Activated B cell treated with CpG ODN at 0.5 μM for 24 hours (primary cell): ENCODE measurements at regions of chr5 and their contacts with region 1.

Region 1: GRCh38 chr5:142108432-142109330 is at the start of gene NDFIP1:
- DNase-seq: peak; percentile 84
- ATAC-seq: peak; percentile 97
- H3K4me3 Mint-ChIP-seq: peak within 1 kb of the TSS; percentile 84
- H3K27ac Mint-ChIP-seq: peak within 1 kb of the TSS; percentile 83
- H3K4me1 Mint-ChIP-seq: peaks cover 31% of the 10 kb centered on the region
- H3K27me3 Mint-ChIP-seq: no peaks in the 10 kb centered on the region
- CTCF ChIP-seq: no peak
- total RNA-seq, gene NDFIP1: 19.7 and 24.2 TPM in 2 replicates

Region 2: GRCh38 chr5:141923448-141924352 is 185.0 kb before region 1 on chr5 and contains the start of gene DELE1:
- CTCF ChIA-PET with region 1: no interaction called
- POLR2A ChIA-PET with region 1: no interaction called
- intact Hi-C with region 1: loop called (anchors 2 kb)
- DNase-seq: peak; percentile 84
- ATAC-seq: peak; percentile 96
- H3K4me3 Mint-ChIP-seq: peak within 1 kb of the TSS; percentile 91
- H3K27ac Mint-ChIP-seq: peak within 1 kb of the TSS; percentile 95
- H3K4me1 Mint-ChIP-seq: peaks cover 23% of the 10 kb centered on the region
- H3K27me3 Mint-ChIP-seq: no peaks in the 10 kb centered on the region
- CTCF ChIP-seq: no peak
- total RNA-seq, gene DELE1: 95.0 and 114 TPM in 2 replicates

Region 3: DNA sequence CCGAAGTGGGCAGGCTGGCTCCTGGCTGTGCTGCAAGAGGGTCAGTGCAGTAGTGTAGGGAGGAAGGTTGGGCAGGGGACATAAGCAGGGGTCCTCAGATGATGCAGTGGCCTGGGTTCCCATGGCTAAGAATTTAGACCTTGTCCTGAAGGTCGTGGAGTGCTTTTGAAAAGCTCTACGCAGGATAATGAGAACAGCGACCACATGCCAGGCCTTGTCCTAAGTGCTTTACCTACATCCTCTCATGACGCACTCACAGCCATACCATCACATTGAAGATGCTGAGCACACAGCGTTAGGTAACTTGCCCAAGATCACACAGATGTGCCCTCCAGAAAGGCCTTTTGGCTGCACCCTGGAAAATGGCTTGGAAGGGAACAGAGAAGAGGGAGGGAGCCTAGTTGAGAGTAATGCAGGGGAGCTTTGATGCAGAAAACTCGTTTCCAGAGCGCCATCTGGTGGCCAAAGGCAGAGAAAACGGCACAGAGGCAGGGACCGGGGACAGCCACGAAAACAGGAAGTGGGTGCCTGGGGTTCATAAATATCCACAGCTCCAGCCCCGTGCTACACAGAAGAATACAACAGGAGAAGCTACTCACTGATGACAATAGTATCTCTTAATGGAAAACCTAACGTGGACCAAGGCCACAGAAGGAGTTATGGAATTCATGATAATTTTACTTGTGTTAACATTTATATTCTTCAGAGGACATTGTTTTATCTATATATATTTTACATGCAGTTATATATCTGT is 148.1 kb before region 1 on chr5:
- CTCF ChIA-PET with region 1: no interaction called
- POLR2A ChIA-PET with region 1: no interaction called
- intact Hi-C with region 1: no loop called
- DNase-seq: peak; percentile 77
- ATAC-seq: peak; percentile 99
- H3K4me3 Mint-ChIP-seq: peak overlapping the region; percentile 9
- H3K27ac Mint-ChIP-seq: peak overlapping the region; percentile 75
- H3K4me1 Mint-ChIP-seq: peaks cover 18% of the 10 kb centered on the region
- H3K27me3 Mint-ChIP-seq: peaks cover 3% of the 10 kb centered on the region
- CTCF ChIP-seq: no peak

Region 4: DNA sequence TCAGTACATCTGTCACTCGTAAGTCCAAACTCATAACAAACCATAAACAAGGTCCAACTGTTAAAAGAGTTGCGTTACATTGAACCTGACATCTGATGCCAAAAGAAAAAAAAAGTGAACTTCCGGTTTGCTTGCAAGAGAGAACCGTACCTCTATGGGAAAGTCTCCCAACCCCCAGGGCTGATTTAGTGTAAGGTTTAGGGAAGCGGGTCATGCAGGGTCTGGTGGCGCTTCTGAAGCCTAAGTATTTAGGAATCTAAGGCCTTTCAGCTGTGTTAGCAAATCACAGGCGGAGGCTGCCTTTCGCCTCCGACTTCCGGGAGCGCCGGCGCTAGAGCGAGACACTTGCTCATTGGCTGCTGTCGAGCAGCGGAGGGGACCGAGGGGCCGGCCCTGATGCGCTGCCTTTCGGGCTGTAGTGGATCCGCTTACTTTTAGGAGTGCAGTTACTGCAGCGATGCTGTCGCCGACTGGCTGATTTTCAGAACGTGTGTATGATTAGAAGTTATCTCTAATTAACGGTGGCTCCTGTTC is 83.8 kb before region 1 on chr5:
- CTCF ChIA-PET with region 1: no interaction called
- POLR2A ChIA-PET with region 1: interaction called, 3 read pairs
- intact Hi-C with region 1: loop called (anchors 1 kb)
- DNase-seq: peak; percentile 65
- ATAC-seq: peak; percentile 100
- H3K4me3 Mint-ChIP-seq: peak overlapping the region; percentile 92
- H3K27ac Mint-ChIP-seq: peak overlapping the region; percentile 97
- H3K4me1 Mint-ChIP-seq: peaks cover 13% of the 10 kb centered on the region
- H3K27me3 Mint-ChIP-seq: peaks cover 25% of the 10 kb centered on the region
- CTCF ChIP-seq: no peak

Region 5: GRCh38 chr5:142046191-142046590 is 62.5 kb before region 1 on chr5:
- CTCF ChIA-PET with region 1: no interaction called
- POLR2A ChIA-PET with region 1: no interaction called
- intact Hi-C with region 1: no loop called
- DNase-seq: no peak
- ATAC-seq: no peak
- H3K4me3 Mint-ChIP-seq: no peak overlapping the region
- H3K27ac Mint-ChIP-seq: no peak overlapping the region
- H3K4me1 Mint-ChIP-seq: no peaks in the 10 kb centered on the region
- H3K27me3 Mint-ChIP-seq: no peaks in the 10 kb centered on the region
- CTCF ChIP-seq: no peak

Region 6: GRCh38 chr5:142079306-142079721 is 29.4 kb before region 1 on chr5:
- CTCF ChIA-PET with region 1: no interaction called
- POLR2A ChIA-PET with region 1: no interaction called
- intact Hi-C with region 1: no loop called
- DNase-seq: no peak
- ATAC-seq: no peak
- H3K4me3 Mint-ChIP-seq: no peak overlapping the region
- H3K27ac Mint-ChIP-seq: no peak overlapping the region
- H3K4me1 Mint-ChIP-seq: no peaks in the 10 kb centered on the region
- H3K27me3 Mint-ChIP-seq: peaks cover 8% of the 10 kb centered on the region
- CTCF ChIP-seq: no peak

Region 7: GRCh38 chr5:142145106-142145900 is 36.6 kb after region 1 on chr5:
- CTCF ChIA-PET with region 1: interaction called, 4 read pairs
- POLR2A ChIA-PET with region 1: no interaction called
- intact Hi-C with region 1: loop called (anchors 1 kb)
- DNase-seq: no peak
- ATAC-seq: peak; percentile 86
- H3K4me3 Mint-ChIP-seq: no peak overlapping the region
- H3K27ac Mint-ChIP-seq: no peak overlapping the region
- H3K4me1 Mint-ChIP-seq: no peaks in the 10 kb centered on the region
- H3K27me3 Mint-ChIP-seq: no peaks in the 10 kb centered on the region
- CTCF ChIP-seq: peak; percentile 78